Left cardiac atrium (tissue), 4 donors: ENCODE measurements at regions of chr7 and their contacts with region 1.

Region 1: GRCh38 chr7:44477063-44477830 is 13.2 kb downstream of the NUDCD3 start:
- DNase-seq: peak; percentile 63
- ATAC-seq: peak; percentile 89 to 90

Region 2: GRCh38 chr7:44240983-44241510 is 236.2 kb before region 1 on chr7:
- intact Hi-C with region 1: loop called (anchors 5 kb)
- DNase-seq: peak; percentile 77
- ATAC-seq: peak; percentile 82 to 87